Activated CD4-positive, alpha-beta memory T cell treated with anti-CD3 and anti-CD28 coated beads for 36 hours (primary cell): ENCODE measurements at regions of chr22 and their contacts with region 1.

Region 1: GRCh38 chr22:35350539-35351503 is 30.1 kb upstream of the HMOX1 start:
- DNase-seq: peak; percentile 92
- H3K4me3 Mint-ChIP-seq: peak overlapping the region; percentile 71
- H3K27ac Mint-ChIP-seq: no peak overlapping the region
- H3K4me1 Mint-ChIP-seq: peaks cover 28% of the 10 kb centered on the region
- H3K27me3 Mint-ChIP-seq: no peaks in the 10 kb centered on the region

Region 2: DNA sequence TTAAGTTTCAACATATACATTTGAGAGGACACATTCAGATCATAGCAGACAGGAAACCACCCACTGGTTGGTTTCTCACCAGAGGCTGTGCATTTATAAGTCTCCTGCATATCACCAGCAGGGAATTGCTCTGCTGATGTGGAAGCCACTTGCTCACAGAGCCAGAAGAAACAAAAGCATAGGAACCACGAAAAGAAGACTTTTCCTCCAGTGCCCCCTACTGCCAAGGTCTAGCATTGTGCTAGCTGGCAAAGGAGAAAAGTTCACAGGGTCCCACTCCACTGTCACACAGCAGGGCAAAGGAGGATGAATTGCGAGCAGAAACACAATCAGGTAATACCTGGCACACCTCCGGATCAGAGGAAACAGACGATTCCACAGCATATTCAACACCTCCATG is 313.7 kb before region 1 on chr22:
- CTCF ChIA-PET with region 1: no interaction called
- POLR2A ChIA-PET with region 1: no interaction called
- intact Hi-C with region 1: no loop called
- DNase-seq: no peak
- H3K4me3 Mint-ChIP-seq: no peak overlapping the region
- H3K27ac Mint-ChIP-seq: no peak overlapping the region
- H3K4me1 Mint-ChIP-seq: no peaks in the 10 kb centered on the region
- H3K27me3 Mint-ChIP-seq: peaks cover 4% of the 10 kb centered on the region

Region 3: GRCh38 chr22:35172442-35172841 is 178.4 kb before region 1 on chr22:
- CTCF ChIA-PET with region 1: no interaction called
- POLR2A ChIA-PET with region 1: no interaction called
- intact Hi-C with region 1: no loop called
- DNase-seq: no peak
- H3K4me3 Mint-ChIP-seq: no peak overlapping the region
- H3K27ac Mint-ChIP-seq: no peak overlapping the region
- H3K4me1 Mint-ChIP-seq: no peaks in the 10 kb centered on the region
- H3K27me3 Mint-ChIP-seq: peaks cover 14% of the 10 kb centered on the region

Region 4: GRCh38 chr22:35376728-35377472 is 26.1 kb after region 1 on chr22:
- CTCF ChIA-PET with region 1: interaction called, 10 read pairs
- POLR2A ChIA-PET with region 1: no interaction called
- intact Hi-C with region 1: no loop called
- DNase-seq: peak; percentile 71
- H3K4me3 Mint-ChIP-seq: no peak overlapping the region
- H3K27ac Mint-ChIP-seq: peak overlapping the region; percentile 77
- H3K4me1 Mint-ChIP-seq: peaks cover 24% of the 10 kb centered on the region
- H3K27me3 Mint-ChIP-seq: peaks cover 3% of the 10 kb centered on the region

Region 5: DNA sequence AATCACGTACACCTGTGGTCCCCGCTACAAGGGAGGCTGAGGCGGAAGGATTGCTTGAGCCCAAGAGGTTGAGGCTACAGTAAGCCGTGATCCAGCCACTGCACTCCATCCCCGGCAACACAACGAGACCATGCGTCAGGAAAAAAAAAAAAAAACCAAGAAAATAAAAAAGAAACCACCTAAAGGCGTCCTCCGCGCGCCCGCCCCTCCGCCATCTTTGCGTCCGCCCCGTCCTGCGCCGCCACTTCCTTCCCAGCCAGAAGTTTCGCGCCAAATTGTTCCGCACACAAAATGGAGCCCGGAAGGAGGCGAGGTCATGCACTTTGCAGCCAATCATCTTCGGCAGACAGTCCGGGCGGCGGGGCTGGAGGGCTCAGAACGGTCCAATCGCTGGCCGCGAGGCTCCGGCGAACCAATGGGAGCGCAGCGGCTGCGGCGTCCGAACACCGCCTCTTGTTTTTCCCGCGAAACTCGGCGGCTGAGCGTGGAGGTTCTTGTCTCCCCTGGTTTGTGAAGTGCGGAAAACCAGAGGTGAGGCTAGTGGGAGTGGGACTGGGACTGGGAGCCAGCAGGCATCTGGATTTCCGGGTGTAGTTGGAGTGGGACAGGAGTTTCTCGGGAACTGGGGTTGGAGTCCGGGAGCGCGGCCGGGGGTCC is 49.0 kb after region 1 on chr22 and contains the start of gene MCM5:
- CTCF ChIA-PET with region 1: interaction called, 15 read pairs
- POLR2A ChIA-PET with region 1: interaction called, 3 read pairs
- intact Hi-C with region 1: loop called (anchors 2 kb)
- DNase-seq: peak; percentile 99
- H3K4me3 Mint-ChIP-seq: peak within 1 kb of the TSS; percentile 96
- H3K27ac Mint-ChIP-seq: peak within 1 kb of the TSS; percentile 97
- H3K4me1 Mint-ChIP-seq: peaks cover 29% of the 10 kb centered on the region
- H3K27me3 Mint-ChIP-seq: no peaks in the 10 kb centered on the region
- total RNA-seq, gene MCM5: 265 to 266 TPM

Region 6: GRCh38 chr22:35582861-35583670 is 232.2 kb after region 1 on chr22:
- CTCF ChIA-PET with region 1: interaction called, 38 read pairs
- POLR2A ChIA-PET with region 1: interaction called, 3 read pairs
- intact Hi-C with region 1: loop called (anchors 1 kb)
- DNase-seq: peak; percentile 64
- H3K4me3 Mint-ChIP-seq: no peak overlapping the region
- H3K27ac Mint-ChIP-seq: no peak overlapping the region
- H3K4me1 Mint-ChIP-seq: no peaks in the 10 kb centered on the region
- H3K27me3 Mint-ChIP-seq: no peaks in the 10 kb centered on the region

Region 7: GRCh38 chr22:36123673-36124630 is 773.1 kb after region 1 on chr22:
- CTCF ChIA-PET with region 1: interaction called, 9 read pairs
- POLR2A ChIA-PET with region 1: no interaction called
- intact Hi-C with region 1: loop called (anchors 5 kb)
- DNase-seq: peak; percentile 95
- H3K4me3 Mint-ChIP-seq: peak overlapping the region; percentile 66
- H3K27ac Mint-ChIP-seq: peak overlapping the region; percentile 67
- H3K4me1 Mint-ChIP-seq: peaks cover 12% of the 10 kb centered on the region
- H3K27me3 Mint-ChIP-seq: no peaks in the 10 kb centered on the region